ENCODE measurements at regions of chr19 and their contacts with region 1.

Region 1: DNA sequence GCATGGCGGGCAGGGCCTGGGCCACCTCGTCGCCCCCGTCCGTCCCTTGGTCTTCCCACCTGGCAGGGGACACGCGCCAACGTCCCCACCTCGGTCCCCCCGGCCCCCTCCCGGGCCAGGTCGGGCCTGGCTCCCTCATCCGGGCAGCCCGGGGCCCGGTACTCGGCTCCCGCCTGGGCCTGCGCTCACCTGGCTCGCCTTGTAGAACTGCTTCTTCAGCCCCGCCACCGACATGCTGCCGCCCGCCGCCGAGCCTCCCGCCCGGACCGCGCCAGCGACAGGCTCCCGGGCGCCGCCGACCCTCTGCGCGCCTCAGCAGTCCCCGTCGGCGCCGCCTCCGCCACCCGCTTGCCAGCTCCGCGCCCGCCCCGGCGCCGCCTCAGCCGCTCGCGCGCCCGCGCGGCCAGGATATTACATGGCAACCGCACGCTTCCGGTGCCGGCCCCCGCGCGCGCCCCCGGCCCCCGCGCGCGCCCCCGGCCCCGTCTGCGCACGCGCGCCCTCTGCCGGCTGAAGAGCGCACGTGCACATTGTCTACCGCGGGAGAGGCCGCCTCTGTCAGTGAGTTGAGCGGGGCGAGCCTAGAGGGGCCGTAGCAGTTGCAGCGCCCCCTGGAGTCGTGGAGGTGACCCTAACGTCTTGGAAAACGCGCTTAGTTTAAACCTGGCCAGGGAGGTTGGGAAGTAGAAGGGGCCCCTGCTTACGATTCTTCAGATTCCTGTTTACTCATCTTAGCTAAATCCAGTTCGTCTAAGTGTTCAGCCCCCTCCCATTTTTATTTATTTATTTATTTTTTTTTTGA is at the start of gene SH3GL1:
- DNase-seq: peak; percentile 93 to 94
- H3K4me3 ChIP-seq: peak within 1 kb of the TSS; percentile 60 to 83 (median 74)
- H3K27ac ChIP-seq: peak within 1 kb of the TSS; percentile 73 to 90 (median 84)
- H3K4me1 ChIP-seq: peaks cover 30 to 51% of the 10 kb centered on the region in 2 donors
- H3K27me3 ChIP-seq: no peaks in the 10 kb centered on the region
- CTCF ChIP-seq: peak; percentile 65 to 100 (median 95)
- POLR2A ChIP-seq: peak; percentile 66 to 88
- total RNA-seq, gene SH3GL1: 33.1 to 42.4 (median 36.7) TPM

Region 2: GRCh38 chr19:4182084-4182810 is 218.1 kb before region 1 on chr19 and contains the starts of genes ANKRD24 and SIRT6:
- intact Hi-C with region 1: no loop called
- DNase-seq: peak; percentile 96
- H3K4me3 ChIP-seq: peak within 1 kb of the TSS; percentile 84 to 97 (median 88)
- H3K27ac ChIP-seq: peak within 1 kb of the TSS; percentile 4 to 77 (median 57)
- H3K4me1 ChIP-seq: peaks cover 15 to 16% of the 10 kb centered on the region in 2 donors
- H3K27me3 ChIP-seq: no peaks in the 10 kb centered on the region
- CTCF ChIP-seq: no peak
- POLR2A ChIP-seq: peak in 1 of 2 donors; percentile 69
- total RNA-seq, gene ANKRD24: 0.54 to 1.2 (median 0.77) TPM
- total RNA-seq, gene SIRT6: 11.9 to 39.3 (median 20.0) TPM

Region 3: DNA sequence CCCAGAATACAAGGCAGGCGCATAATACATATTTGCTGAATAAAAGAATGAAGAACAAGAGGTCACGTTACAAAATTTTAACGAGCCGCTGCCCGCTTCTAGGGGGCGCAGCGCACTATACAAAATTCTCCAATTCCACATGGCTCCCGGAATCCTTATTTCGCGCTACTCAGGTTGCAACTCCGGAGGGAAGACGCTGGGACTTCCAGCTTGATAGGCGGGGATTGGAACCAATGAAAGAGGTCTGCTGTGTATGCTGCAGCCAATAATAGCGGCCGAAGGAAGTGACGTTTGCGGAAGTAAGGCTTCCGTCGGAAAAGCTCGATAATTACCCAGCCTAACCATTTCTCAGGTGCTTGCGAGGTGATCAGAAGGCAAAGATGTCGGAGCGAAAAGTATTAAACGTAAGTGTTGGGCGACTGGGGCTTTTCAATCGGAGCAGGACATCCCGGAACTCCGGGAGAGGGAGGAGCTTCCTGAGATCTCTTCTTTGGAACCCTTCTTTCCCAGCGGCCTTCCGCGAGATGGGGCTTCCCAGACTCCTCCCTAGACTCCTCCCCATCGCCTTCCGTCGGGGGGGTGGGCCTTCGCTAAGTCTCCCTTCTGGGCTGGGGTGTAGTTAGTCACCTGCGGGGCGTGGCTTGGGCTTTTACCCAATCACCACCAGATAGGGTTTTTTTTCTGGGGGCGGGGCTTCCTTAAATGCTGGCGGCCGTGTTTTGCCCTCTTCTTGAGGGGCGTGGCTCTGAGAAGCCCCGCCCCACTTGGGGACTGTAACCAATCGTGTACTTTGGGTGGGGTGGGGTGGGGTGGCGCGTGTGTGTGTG is 153.4 kb before region 1 on chr19 and contains the start of gene YJU2:
- intact Hi-C with region 1: loop called (anchors 10 kb)
- DNase-seq: peak; percentile 99
- H3K4me3 ChIP-seq: peak within 1 kb of the TSS in 2 of 3 donors; percentile 46 to 72
- H3K27ac ChIP-seq: peak within 1 kb of the TSS; percentile 87 to 98 (median 92)
- H3K4me1 ChIP-seq: peaks cover 5 to 12% of the 10 kb centered on the region in 2 donors
- H3K27me3 ChIP-seq: no peaks in the 10 kb centered on the region
- CTCF ChIP-seq: peak in 4 of 6 experiments; percentile 40 to 54 (median 45)
- POLR2A ChIP-seq: peak in 1 of 2 donors; percentile 40
- total RNA-seq, gene YJU2: 25.9 to 34.1 (median 31.3) TPM

Region 4: DNA sequence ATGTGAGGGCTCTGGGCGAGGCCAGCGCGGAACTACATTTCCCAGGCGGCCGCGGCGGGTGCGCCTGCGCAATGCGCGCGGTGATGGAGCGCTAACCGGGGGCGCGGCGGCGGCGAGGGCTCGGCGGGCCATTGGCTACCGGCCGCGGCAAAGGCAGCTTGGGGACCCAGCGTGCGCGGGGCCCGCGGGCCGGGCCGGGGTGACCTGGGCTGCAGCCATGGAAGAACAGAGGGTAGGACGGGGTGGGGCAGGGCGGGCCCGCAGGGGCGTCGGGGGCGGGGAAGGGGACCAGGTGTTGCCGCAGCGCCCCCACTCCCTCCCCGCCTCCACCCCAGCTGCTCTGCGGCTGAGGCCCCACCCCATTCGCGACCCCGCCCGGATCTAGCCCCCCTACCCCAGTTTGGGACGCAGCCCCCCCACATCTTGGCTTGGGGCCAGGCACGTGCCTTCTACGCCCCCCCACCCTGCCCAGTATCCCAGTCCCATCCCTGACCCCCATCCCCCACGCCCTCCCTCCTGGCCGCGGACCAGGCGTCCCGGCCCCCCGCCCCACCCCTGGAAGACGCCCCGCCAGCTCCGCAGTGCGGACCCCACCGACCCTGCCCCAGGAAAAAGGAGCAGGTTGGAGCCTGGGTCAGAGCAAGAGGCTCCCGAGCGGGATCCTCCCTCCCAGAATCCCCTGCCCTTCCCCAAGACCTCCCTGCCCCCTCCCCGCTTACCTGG is 95.6 kb before region 1 on chr19 and contains the start of gene FSD1:
- intact Hi-C with region 1: no loop called
- DNase-seq: no peak
- H3K4me3 ChIP-seq: no peak within 1 kb of the TSS
- H3K27ac ChIP-seq: no peak within 1 kb of the TSS
- H3K4me1 ChIP-seq: no peaks in the 10 kb centered on the region
- H3K27me3 ChIP-seq: no peaks in the 10 kb centered on the region
- CTCF ChIP-seq: no peak
- POLR2A ChIP-seq: no peak
- total RNA-seq, gene FSD1: not detected

Measured in thyroid gland (tissue), 4 donors.